Psoas muscle (tissue), 8 donors: ENCODE measurements at regions of chr1 and their contacts with region 1.

Region 1: DNA sequence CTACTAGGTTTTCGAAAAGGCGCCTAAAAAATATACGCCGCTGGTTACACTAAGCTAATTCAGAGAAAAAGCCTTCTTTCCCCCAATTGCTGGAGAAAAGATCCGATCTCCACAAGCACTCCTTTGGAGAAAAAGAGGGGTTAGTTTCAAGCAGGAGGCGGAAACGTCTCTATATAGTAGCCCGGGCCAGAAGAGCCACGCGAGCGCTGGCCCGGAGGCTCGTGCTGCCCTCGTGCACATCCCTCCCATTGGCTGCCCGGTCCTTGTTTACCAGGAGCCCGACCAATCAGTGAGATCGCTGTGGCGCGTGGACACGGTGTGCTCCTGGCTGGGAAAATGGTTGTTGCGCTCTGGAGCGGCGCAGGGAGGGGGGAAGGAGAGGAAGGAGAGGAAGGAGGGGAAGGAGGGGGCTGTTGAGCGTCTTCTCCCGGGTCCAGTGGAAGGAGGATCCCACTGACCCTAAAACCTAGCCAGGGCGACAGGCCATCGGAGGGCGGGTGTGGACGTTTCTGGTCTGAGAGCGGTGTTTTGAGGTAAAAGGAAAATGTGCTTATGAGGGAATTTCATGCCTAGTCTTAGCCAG is at the start of gene TXNIP:
- DNase-seq: peak; percentile 99 to 100
- ATAC-seq: peak; percentile 60 to 82 (median 72)
- H3K4me3 ChIP-seq: peak within 1 kb of the TSS; percentile 80
- H3K27ac ChIP-seq: peak within 1 kb of the TSS; percentile 98
- H3K4me1 ChIP-seq: peaks cover 29% of the 10 kb centered on the region
- H3K27me3 ChIP-seq: no peaks in the 10 kb centered on the region
- CTCF ChIP-seq: no peak
- total RNA-seq, gene TXNIP: 887 to 2,747 (median 1,374) TPM

Region 2: DNA sequence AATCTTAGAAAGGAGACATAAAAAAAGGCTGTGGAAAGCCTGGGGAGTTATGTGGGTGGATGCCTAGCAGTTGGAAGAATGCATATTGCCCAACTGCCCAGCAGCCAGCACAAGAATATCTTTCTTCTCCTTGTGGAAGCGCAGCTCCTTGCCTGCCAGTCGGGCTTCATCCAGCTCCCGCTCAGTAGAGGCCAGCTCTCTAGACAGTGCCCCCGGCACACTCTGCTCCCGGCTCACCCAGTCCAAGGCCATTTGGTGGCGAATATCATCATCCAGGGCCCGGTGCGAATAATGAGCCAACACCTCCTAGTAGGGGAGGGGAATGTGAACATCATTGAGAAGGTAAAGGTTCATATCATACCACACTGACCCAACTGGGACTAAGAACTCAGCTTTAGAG is 60.3 kb before region 1 on chr1:
- intact Hi-C with region 1: no loop called
- DNase-seq: peak in 1 of 2 donors; percentile 74
- ATAC-seq: peak; percentile 80 to 90 (median 82)
- H3K4me3 ChIP-seq: no peak overlapping the region
- H3K27ac ChIP-seq: peak overlapping the region; percentile 70
- H3K4me1 ChIP-seq: peaks cover 37% of the 10 kb centered on the region
- H3K27me3 ChIP-seq: no peaks in the 10 kb centered on the region
- CTCF ChIP-seq: no peak

Region 3: GRCh38 chr1:145949219-145949618 is 47.3 kb before region 1 on chr1:
- intact Hi-C with region 1: loop called in 1 of 2 experiments (anchors 5 kb)
- DNase-seq: no peak
- ATAC-seq: peak; percentile 92 to 95 (median 94)
- H3K4me3 ChIP-seq: no peak overlapping the region
- H3K27ac ChIP-seq: peak overlapping the region; percentile 89
- H3K4me1 ChIP-seq: peaks cover 64% of the 10 kb centered on the region
- H3K27me3 ChIP-seq: no peaks in the 10 kb centered on the region
- CTCF ChIP-seq: no peak

Region 4: DNA sequence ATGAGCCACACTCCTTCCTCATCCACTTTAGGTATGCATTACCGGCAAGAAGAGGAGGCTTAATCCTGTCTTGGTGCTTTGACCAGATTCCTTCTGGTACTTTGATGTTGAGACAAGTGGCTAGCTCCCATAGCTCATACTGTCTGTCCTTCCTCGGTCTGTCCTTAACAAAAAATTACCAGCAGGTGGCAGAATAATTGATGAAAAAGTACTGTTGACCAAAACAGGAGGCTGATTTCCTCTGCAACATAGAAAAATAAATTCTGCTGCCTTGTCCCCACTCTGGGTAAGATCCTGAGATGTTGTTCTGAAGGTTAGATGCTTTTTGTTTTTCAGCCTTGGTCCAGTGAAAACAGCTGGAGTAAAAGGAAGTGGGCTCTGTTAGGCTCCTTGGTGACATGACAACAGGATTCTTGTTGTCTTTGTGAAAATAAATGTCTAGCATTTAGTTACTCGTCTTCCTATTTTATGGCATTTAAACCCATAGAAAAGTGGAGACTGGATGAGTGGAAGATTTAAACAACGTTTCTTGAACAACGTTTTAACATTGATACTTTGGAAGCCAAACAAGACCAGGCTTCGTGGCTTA is 36.2 kb after region 1 on chr1:
- intact Hi-C with region 1: no loop called
- DNase-seq: no peak
- ATAC-seq: no peak
- H3K4me3 ChIP-seq: no peak overlapping the region
- H3K27ac ChIP-seq: peak overlapping the region; percentile 54
- H3K4me1 ChIP-seq: peaks cover 21% of the 10 kb centered on the region
- H3K27me3 ChIP-seq: no peaks in the 10 kb centered on the region
- CTCF ChIP-seq: peak; percentile 45